CD4-positive, alpha-beta memory T cell (primary cell): ENCODE measurements at regions of chr12 and their contacts with region 1.

Region 1: GRCh38 chr12:68844788-68845695 is 37.1 kb downstream of the MDM2 start:
- DNase-seq: no peak
- H3K4me3 ChIP-seq: no peak overlapping the region
- H3K4me3 Mint-ChIP-seq: no peak overlapping the region
- H3K27ac ChIP-seq: no peak overlapping the region
- H3K27ac Mint-ChIP-seq: peak overlapping the region in 2 of 7 donors; percentile 37 to 47
- H3K4me1 ChIP-seq: no peaks in the 10 kb centered on the region
- H3K4me1 Mint-ChIP-seq: peaks cover 0 to 5% (median under 1%) of the 10 kb centered on the region in 4 donors
- H3K27me3 ChIP-seq: no peaks in the 10 kb centered on the region
- H3K27me3 Mint-ChIP-seq: no peaks in the 10 kb centered on the region

Region 2: DNA sequence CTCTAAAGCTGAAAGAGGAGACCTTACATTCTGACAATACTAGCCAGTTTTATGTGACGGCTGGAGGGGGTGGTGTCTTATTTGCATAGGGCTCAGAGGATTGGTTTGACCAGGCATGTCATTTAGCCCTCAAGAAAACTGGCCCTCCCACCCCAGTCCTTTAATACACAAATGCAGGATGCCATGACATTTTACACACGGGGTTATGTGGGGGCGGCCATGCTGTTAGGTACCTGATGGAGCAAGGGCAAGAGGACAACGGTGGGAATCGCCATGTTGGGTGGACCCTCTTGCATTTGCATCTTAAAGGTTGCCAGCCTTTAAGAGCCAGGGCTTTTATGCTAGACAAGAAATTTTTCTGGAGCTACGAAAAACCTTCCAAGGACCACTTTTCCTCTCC is 13.8 kb before region 1 on chr12:
- CTCF ChIA-PET with region 1: interaction called, 43 read pairs
- POLR2A ChIA-PET with region 1: interaction called, 4 read pairs
- intact Hi-C with region 1: no loop called
- DNase-seq: no peak
- H3K4me3 ChIP-seq: no peak overlapping the region
- H3K4me3 Mint-ChIP-seq: no peak overlapping the region
- H3K27ac ChIP-seq: no peak overlapping the region
- H3K27ac Mint-ChIP-seq: peak overlapping the region in 1 of 7 donors; percentile 69
- H3K4me1 ChIP-seq: peaks cover 4% of the 10 kb centered on the region
- H3K4me1 Mint-ChIP-seq: peaks cover 5 to 13% (median 6%) of the 10 kb centered on the region in 4 donors
- H3K27me3 ChIP-seq: no peaks in the 10 kb centered on the region
- H3K27me3 Mint-ChIP-seq: no peaks in the 10 kb centered on the region